PC-9 (cell line): ENCODE measurements at regions of chr6 and their contacts with region 1.

Region 1: GRCh38 chr6:134640975-134641429 is 308.9 kb downstream of the ALDH8A1 start:
- DNase-seq: peak; percentile 65 to 82
- H3K4me3 ChIP-seq: no peak overlapping the region
- H3K27ac ChIP-seq: no peak overlapping the region
- H3K4me1 ChIP-seq: peaks cover 32% of the 10 kb centered on the region
- H3K27me3 ChIP-seq: no peaks in the 10 kb centered on the region
- CTCF ChIP-seq: peak; percentile 98

Region 2: DNA sequence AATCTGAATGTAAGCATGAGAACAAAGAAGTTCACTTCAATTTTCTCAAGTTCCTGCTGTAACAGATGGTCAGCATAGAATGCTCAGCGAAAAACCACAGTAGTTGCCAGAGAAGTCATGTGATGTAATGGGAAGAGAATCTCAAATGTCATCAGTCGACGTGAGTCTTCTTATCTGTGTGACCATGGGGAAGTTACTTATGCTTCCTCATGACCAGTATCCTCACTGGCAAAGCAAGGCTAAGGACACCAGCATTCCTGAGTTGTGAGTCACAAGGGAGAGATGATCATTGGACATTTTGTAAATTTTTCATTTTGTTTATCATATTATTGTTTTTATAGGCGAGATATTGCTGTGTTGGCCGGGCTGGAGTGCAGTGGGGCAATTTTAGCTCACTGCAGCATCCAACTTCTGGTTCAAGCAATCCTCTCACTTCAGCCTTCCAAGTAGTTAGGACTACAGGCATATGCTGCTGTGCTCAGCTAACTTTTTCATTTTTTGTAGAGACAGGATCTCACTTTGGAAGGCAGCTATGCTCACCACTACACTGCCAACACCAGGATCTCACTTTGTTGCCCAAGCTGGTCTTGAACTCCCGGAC is 344.9 kb before region 1 on chr6:
- CTCF ChIA-PET with region 1: interaction called, 3 read pairs
- POLR2A ChIA-PET with region 1: no interaction called
- intact Hi-C with region 1: loop called (anchors 10 kb)
- DNase-seq: peak; percentile 63 to 99
- H3K4me3 ChIP-seq: no peak overlapping the region
- H3K27ac ChIP-seq: peak overlapping the region; percentile 70
- H3K4me1 ChIP-seq: peaks cover 30% of the 10 kb centered on the region
- H3K27me3 ChIP-seq: no peaks in the 10 kb centered on the region
- CTCF ChIP-seq: no peak

Region 3: GRCh38 chr6:134491477-134491876 is 149.5 kb before region 1 on chr6:
- CTCF ChIA-PET with region 1: no interaction called
- POLR2A ChIA-PET with region 1: no interaction called
- intact Hi-C with region 1: no loop called
- DNase-seq: peak in 1 of 2 experiments; percentile 63
- H3K4me3 ChIP-seq: no peak overlapping the region
- H3K27ac ChIP-seq: peak overlapping the region; percentile 17; the same call in 1 of the 2 replicates
- H3K4me1 ChIP-seq: 0 out of 2 replicates have a peak, but pooled peaks cover 8% of the 10 kb centered on the region
- H3K27me3 ChIP-seq: no peaks in the 10 kb centered on the region
- CTCF ChIP-seq: no peak

Region 4: GRCh38 chr6:134537146-134537555 is 103.9 kb before region 1 on chr6:
- CTCF ChIA-PET with region 1: no interaction called
- POLR2A ChIA-PET with region 1: no interaction called
- intact Hi-C with region 1: loop called (anchors 5 kb)
- DNase-seq: peak; percentile 66 to 96
- H3K4me3 ChIP-seq: no peak overlapping the region
- H3K27ac ChIP-seq: peak overlapping the region; percentile 72
- H3K4me1 ChIP-seq: peaks cover 23% of the 10 kb centered on the region
- H3K27me3 ChIP-seq: no peaks in the 10 kb centered on the region
- CTCF ChIP-seq: no peak

Region 5: GRCh38 chr6:134757911-134758361 is 116.9 kb after region 1 on chr6:
- CTCF ChIA-PET with region 1: no interaction called
- POLR2A ChIA-PET with region 1: no interaction called
- intact Hi-C with region 1: loop called (anchors 2 kb)
- DNase-seq: peak; percentile 78 to 99
- H3K4me3 ChIP-seq: peak overlapping the region; percentile 15; the same call in 1 of the 2 replicates
- H3K27ac ChIP-seq: peak overlapping the region; percentile 77
- H3K4me1 ChIP-seq: peaks cover 37% of the 10 kb centered on the region
- H3K27me3 ChIP-seq: no peaks in the 10 kb centered on the region
- CTCF ChIP-seq: no peak

Region 6: DNA sequence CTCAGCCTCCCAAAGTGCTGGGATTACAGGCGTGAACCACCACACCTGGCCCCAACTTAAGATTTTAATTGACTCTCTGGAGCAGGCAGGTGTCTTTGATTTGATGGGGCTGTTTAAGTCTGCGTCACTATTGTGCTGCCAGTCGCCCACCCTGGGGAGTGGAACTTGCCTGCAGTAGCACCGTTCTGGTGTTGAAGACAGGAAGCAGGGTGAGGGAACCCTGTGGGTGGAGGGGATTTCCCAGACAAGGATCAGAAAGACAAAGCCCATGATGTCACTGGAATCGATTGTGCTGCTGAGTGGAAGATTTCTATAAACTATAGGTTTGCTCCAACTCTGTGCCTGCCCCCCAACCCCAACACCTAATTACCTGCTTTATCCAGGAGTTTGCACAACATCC is 297.9 kb after region 1 on chr6:
- CTCF ChIA-PET with region 1: no interaction called
- POLR2A ChIA-PET with region 1: no interaction called
- intact Hi-C with region 1: loop called (anchors 5 kb)
- DNase-seq: no peak
- H3K4me3 ChIP-seq: no peak overlapping the region
- H3K27ac ChIP-seq: no peak overlapping the region
- H3K4me1 ChIP-seq: no peaks in the 10 kb centered on the region
- H3K27me3 ChIP-seq: no peaks in the 10 kb centered on the region
- CTCF ChIP-seq: no peak